Heart right ventricle (tissue), 16 donors: ENCODE measurements at regions of chr1 and their contacts with region 1.

Region 1: DNA sequence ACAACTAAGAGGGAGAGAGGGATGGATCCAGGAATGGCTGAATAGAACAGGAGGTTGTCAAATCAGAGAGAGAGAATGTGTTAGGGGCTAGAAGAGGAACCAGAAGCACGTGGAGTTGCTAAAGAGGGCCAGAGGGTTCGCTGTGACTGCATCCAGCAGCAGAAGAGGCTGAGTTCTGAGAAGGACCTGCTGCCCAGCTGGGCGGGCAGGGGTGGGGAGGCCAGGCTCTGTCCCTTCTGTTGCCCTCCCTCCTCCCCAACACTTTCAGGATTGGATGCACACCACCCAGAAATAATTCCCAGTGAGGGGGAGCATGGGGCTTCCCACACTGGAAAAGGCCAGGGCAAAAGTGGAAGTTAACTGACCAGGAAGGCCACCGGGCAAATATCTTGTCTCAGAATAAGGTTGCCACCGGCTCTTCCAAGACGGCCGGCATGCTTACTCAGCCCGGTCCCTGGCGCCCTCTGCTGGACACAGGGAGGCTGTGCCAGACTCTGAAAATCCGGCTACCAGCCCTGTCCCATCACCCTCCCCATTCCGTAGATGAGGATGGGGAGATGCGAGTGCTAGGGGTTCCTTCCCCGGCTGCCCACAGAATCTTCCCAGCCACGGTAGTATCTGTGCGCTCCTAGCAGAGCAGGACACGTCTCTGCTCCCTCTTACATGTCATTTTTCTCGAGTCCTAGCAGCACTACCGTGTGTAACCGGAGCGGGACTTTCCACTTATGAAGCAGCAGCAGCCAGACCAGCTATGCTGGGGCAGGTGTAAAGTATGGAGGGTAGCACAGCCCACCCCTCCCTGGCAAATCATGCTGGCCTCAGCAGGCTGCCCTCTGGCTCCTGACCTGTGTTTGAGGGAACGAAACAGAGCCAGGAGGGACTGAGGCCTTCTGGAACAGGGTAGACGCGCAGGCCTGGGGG is 46.8 kb upstream of the A3GALT2 start:
- DNase-seq: peak; percentile 88 to 90
- ATAC-seq: peak; percentile 65 to 81 (median 74)
- H3K4me3 ChIP-seq: no peak overlapping the region
- H3K27ac ChIP-seq: peak overlapping the region in 9 of 10 donors; percentile 48 to 88 (median 80)
- H3K4me1 ChIP-seq: peaks cover 35 to 73% (median 54%) of the 10 kb centered on the region in 9 donors
- H3K27me3 ChIP-seq: no peaks in the 10 kb centered on the region
- CTCF ChIP-seq: peak; percentile 96 to 99 (median 97)

Region 2: GRCh38 chr1:33094971-33095604 is 272.7 kb before region 1 on chr1:
- intact Hi-C with region 1: loop called in 2 of 10 experiments (anchors 2 to 5 kb)
- DNase-seq: peak in 1 of 2 donors; percentile 63
- ATAC-seq: peak in 4 of 8 donors; percentile 22 to 55 (median 41)
- H3K4me3 ChIP-seq: no peak overlapping the region
- H3K27ac ChIP-seq: no peak overlapping the region
- H3K4me1 ChIP-seq: peaks cover 0 to 35% (median 7%) of the 10 kb centered on the region in 9 donors
- H3K27me3 ChIP-seq: no peaks in the 10 kb centered on the region
- CTCF ChIP-seq: peak; percentile 92 to 99 (median 98)

Region 3: DNA sequence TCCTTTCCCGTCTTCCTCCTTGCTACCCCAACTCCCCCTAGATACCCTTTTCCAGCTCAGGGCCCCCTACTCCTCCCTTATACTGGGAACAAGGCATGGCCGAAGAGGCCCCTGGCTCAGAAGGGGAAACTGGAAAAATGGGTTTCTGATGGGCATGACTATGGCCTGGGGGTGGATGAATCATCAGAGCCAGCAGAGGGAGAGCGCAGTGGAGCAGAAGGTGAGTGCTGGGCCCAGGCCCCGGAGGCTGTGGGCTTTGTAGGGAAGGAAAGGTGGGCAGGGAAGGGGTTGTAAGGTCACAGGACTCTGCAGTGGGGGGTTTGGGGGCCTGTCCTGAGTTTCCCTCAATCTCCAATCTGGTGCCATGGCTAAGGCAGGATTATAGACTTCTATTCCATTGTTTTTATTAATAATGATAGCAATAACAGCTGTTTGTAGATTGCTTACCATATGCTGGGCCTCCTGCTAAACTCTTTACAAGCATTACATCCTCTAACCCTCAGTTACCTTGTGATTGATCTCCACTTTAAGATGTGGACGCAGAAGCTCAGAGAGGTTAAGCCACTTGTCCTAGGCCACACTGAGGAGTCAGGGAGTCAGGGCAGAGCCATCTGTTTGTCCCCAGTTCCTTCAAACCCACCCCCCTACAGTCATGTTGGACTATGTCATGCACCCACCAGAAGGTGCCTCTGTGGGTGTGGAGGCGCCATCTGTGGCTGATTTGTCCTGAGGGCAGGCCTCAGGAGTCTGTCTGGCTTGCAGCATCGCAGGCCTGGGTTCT is 147.7 kb before region 1 on chr1:
- intact Hi-C with region 1: loop called in 7 of 10 experiments (anchors 2 to 10 kb)
- DNase-seq: no peak
- ATAC-seq: peak in 4 of 8 donors; percentile 30 to 46 (median 44)
- H3K4me3 ChIP-seq: no peak overlapping the region
- H3K27ac ChIP-seq: peak overlapping the region in 2 of 10 donors; percentile 2 to 15
- H3K4me1 ChIP-seq: peaks cover 0 to 25% (median 6%) of the 10 kb centered on the region in 9 donors
- H3K27me3 ChIP-seq: no peaks in the 10 kb centered on the region
- CTCF ChIP-seq: no peak

Region 4: DNA sequence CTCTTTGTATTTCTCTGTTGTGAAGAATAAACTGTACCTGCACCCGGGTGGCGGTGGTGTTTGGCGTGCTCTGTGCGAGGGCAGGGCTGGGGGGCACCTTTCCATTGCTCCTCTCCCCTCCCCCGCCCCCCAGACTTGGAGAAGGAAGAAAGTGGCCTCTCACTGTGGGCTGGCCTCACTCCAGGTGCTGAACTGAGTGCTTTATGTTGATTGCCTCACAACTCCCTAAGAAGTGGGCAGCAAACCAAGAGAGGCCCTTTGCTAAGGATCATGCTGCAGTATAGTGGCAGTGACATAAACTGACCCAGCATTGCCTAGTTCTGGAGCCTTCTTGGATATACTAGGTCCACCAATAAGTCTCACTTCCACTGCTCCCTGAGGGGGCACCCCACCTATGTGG is 67.1 kb before region 1 on chr1:
- intact Hi-C with region 1: loop called (anchors 1 to 5 kb)
- DNase-seq: peak in 1 of 2 donors; percentile 54
- ATAC-seq: peak in 2 of 8 donors; percentile 41 to 49
- H3K4me3 ChIP-seq: no peak overlapping the region
- H3K27ac ChIP-seq: no peak overlapping the region
- H3K4me1 ChIP-seq: peaks cover 0 to 35% (median 21%) of the 10 kb centered on the region in 9 donors
- H3K27me3 ChIP-seq: no peaks in the 10 kb centered on the region
- CTCF ChIP-seq: no peak

Region 5: DNA sequence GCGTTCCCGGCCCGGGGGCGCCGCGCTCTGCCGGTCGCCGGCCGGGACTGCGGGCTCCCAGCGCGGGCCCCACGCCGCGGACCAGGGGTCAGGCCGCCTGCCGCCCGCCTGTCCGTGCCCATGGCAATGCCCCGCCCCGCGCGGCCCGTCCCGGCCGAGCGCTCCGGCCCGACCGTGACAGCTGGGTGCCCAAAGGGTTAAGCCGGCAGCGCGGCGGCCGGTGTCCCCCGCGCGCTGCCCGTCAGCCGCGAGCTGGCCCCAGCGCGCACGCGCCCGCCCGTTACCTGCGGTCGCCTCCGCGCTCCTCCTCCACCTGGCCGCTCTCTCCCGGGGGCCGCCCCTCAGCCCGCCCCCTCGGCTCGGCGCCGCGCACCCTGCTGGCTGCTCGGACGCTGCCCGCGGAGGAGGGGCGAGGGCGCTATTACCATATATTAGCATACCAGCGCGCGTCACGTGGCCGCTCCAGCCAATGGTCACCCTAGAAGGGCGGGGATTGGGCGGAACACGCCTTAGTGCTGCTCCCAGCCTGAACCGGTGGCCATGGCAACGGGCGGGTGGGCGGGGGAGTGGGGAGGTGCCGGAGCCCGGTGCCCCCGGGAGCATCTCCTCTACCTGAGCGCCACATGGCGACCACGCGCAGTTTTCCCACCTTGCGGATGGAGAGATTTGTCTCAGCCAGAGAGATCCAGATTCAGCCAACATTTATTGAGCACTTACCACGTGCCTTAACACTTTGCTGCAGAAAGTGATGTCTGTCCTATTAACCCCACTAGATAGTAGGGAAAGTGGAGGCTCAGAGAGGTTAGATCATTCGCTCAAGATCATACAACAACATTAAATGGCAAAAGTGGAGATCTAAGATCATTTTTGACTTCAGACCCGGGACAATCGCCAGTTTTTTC is 63.2 kb after region 1 on chr1 and contains the start of gene PHC2:
- intact Hi-C with region 1: loop called in 3 of 10 experiments (anchors 1 to 10 kb)
- DNase-seq: peak; percentile 97 to 98
- ATAC-seq: peak; percentile 96 to 98 (median 97)
- H3K4me3 ChIP-seq: peak within 1 kb of the TSS; percentile 69 to 95 (median 76)
- H3K27ac ChIP-seq: peak within 1 kb of the TSS; percentile 62 to 89 (median 86)
- H3K4me1 ChIP-seq: peaks cover 0 to 79% (median 50%) of the 10 kb centered on the region in 9 donors
- H3K27me3 ChIP-seq: no peaks in the 10 kb centered on the region
- CTCF ChIP-seq: peak in 8 of 9 donors; percentile 32 to 66 (median 42)
- total RNA-seq, gene PHC2: 96.7 to 136 (median 102) TPM

Region 6: DNA sequence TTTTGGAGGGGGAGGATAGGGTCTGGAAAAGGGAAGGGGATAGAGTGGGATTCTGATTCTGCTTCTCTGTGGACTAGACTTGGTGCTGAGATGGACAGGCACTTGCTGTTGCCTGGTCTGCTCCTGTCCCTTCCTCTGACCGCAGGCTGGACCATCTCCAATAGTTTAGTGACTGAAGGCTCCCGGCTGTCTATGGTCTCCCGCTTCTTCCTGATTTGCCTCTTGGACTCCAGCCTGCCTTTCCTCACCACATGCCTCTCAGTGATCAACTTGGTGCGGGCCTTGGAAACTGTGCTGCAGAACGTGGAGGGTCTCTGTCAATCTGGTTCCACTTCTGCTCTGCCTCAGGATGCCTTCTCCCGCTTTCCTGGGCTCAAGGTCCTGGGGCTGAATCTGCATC is 98.4 kb after region 1 on chr1:
- intact Hi-C with region 1: loop called in 7 of 10 experiments (anchors 2 to 10 kb)
- DNase-seq: peak in 1 of 2 donors; percentile 60
- ATAC-seq: peak in 4 of 8 donors; percentile 12 to 57 (median 38)
- H3K4me3 ChIP-seq: no peak overlapping the region
- H3K27ac ChIP-seq: peak overlapping the region in 2 of 10 donors; percentile 14 to 15
- H3K4me1 ChIP-seq: peaks cover 0 to 47% (median 28%) of the 10 kb centered on the region in 9 donors
- H3K27me3 ChIP-seq: no peaks in the 10 kb centered on the region
- CTCF ChIP-seq: no peak